MCF 10A (cell line): ENCODE measurements at regions of chr11 and their contacts with region 1.

Region 1: DNA sequence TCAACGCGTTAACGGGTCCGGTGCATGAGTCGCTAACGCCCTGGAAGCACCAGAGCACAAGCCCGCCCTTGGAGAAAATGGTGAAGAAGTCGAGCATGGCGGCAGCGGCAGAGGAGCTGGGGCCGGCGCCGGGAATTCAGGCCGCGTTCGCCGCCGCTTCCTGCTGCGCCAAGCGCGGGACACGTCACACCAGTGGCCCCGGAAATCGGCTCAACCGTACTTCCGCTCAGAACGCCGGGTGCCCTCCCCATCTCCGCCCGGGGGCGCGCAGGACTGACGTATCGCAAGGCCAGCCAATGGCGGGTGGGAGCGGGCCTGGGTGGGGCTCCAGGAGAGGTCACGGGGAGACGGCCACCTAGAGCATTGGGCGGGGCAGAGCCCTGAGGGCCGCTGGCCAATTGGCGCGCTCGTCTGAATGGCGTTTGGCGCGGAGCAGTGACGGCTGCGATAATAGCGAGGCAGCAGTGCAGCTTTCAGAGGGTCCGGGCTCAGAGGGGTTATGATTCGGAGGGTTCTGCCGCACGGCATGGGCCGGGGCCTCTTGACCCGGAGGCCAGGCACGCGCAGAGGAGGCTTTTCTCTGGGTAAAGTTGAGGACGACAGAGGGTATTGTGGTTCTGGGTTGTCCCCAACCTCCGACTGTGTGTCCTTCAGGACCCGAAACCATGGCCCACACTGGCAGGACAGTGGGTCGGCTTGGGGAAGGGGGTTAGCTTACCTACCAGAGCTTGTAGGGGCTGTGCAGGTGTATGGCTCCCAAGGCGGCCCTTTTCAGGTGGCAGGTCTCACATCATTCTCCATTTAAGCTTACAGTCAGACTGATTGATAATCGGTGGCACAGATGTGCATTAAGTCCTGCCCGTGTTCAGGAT is at the starts of genes FOXRED1 and SRPRA:
- DNase-seq: peak; percentile 99
- H3K4me3 Mint-ChIP-seq: peak within 1 kb of the TSS; percentile 94
- H3K27ac Mint-ChIP-seq: peak within 1 kb of the TSS; percentile 97
- H3K4me1 Mint-ChIP-seq: peaks cover 23% of the 10 kb centered on the region
- H3K27me3 Mint-ChIP-seq: no peaks in the 10 kb centered on the region
- CTCF ChIP-seq: no peak
- total RNA-seq, gene FOXRED1: 28.2 and 37.2 TPM in 2 replicates
- total RNA-seq, gene SRPRA: 176 and 258 TPM in 2 replicates

Region 2: GRCh38 chr11:126211235-126212088 is 57.5 kb before region 1 on chr11 and contains the starts of genes FAM118B and RPUSD4:
- CTCF ChIA-PET with region 1: interaction called, 5 read pairs
- POLR2A ChIA-PET with region 1: interaction called, 18 read pairs
- intact Hi-C with region 1: loop called (anchors 1 kb)
- DNase-seq: peak; percentile 96
- H3K4me3 Mint-ChIP-seq: peak within 1 kb of the TSS; percentile 96
- H3K27ac Mint-ChIP-seq: peak within 1 kb of the TSS; percentile 96
- H3K4me1 Mint-ChIP-seq: peaks cover 18% of the 10 kb centered on the region
- H3K27me3 Mint-ChIP-seq: no peaks in the 10 kb centered on the region
- CTCF ChIP-seq: no peak
- total RNA-seq, gene FAM118B: 8.3 and 13.4 TPM in 2 replicates
- total RNA-seq, gene RPUSD4: 19.4 and 26.7 TPM in 2 replicates

Region 3: DNA sequence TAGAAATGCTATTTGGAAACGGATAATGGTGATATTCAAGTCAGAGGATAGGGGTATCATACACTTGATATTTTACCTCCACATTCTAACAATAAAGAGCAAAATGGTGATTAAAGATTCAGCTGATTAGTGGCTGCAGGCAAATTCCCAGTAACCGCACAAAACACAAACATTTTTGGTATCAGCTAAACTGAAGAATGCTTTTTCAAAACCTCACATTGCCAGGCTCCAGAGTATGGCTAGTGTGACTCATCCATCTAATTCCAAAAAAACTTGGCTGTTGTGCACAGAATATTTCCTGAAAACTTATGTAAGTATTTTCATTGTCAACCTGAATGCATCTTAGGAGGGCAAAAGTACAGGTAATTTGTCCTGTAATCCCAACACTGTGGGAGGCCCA is 11.2 kb before region 1 on chr11:
- CTCF ChIA-PET with region 1: no interaction called
- POLR2A ChIA-PET with region 1: interaction called, 13 read pairs
- intact Hi-C with region 1: no loop called
- DNase-seq: peak; percentile 26
- H3K4me3 Mint-ChIP-seq: no peak overlapping the region
- H3K27ac Mint-ChIP-seq: no peak overlapping the region
- H3K4me1 Mint-ChIP-seq: peaks cover 5% of the 10 kb centered on the region
- H3K27me3 Mint-ChIP-seq: no peaks in the 10 kb centered on the region
- CTCF ChIP-seq: no peak

Region 4: GRCh38 chr11:126282736-126283591 is 14.0 kb after region 1 on chr11 and contains the start of gene TIRAP:
- CTCF ChIA-PET with region 1: interaction called, 6 read pairs
- POLR2A ChIA-PET with region 1: interaction called, 41 read pairs
- intact Hi-C with region 1: no loop called
- DNase-seq: peak; percentile 55
- H3K4me3 Mint-ChIP-seq: peak within 1 kb of the TSS; percentile 83
- H3K27ac Mint-ChIP-seq: peak within 1 kb of the TSS; percentile 80
- H3K4me1 Mint-ChIP-seq: peaks cover 21% of the 10 kb centered on the region
- H3K27me3 Mint-ChIP-seq: no peaks in the 10 kb centered on the region
- CTCF ChIP-seq: no peak
- total RNA-seq, gene TIRAP: 11.9 and 14.0 TPM in 2 replicates

Region 5: DNA sequence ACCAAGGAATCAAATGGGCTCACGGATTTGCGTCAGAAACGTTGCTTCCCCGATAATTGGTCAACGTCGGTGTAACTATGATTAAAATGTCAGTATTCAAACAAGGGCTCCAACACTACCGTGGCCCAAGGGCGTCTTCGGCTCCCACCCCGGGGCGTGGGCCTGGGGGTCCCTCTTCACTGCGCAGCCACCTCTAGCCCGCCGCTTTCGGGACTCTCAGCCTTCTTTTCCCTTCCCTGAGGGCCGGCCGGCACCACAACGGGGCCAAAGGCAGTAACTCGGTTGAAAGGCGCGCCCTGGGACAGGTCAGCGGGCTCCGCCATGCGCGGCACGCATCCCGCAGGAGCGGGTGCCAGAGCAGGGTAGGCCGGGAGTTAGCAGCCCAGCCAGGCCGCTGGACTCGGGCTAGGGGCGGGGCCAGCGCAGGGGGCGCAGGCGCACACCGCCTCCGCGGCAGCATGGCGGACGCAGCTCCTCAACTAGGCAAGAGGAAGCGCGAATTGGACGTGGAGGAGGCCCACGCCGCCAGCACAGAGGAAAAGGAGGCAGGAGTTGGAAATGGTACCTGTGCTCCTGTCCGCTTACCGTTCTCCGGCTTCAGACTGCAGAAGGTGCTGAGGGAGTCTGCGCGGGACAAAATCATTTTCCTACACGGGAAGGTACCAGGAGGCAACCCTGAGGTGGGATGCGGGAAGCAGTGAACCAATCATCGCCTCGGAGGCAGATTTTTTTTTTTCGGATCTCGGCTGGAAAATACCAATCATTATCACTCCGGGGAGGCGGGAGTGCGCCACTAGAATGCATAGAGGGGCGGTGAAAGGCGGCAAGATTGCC is 34.9 kb after region 1 on chr11 and contains the start of gene DCPS:
- CTCF ChIA-PET with region 1: no interaction called
- POLR2A ChIA-PET with region 1: interaction called, 4 read pairs
- intact Hi-C with region 1: loop called (anchors 1 kb)
- DNase-seq: peak; percentile 88
- H3K4me3 Mint-ChIP-seq: peak within 1 kb of the TSS; percentile 89
- H3K27ac Mint-ChIP-seq: peak within 1 kb of the TSS; percentile 79
- H3K4me1 Mint-ChIP-seq: peaks cover 6% of the 10 kb centered on the region
- H3K27me3 Mint-ChIP-seq: no peaks in the 10 kb centered on the region
- CTCF ChIP-seq: no peak
- total RNA-seq, gene DCPS: 29.6 and 33.7 TPM in 2 replicates